Activated CD4-positive, alpha-beta T cell treated with anti-CD3 and anti-CD28 coated beads, Interleukin-2, amount 10 ng/mL, durations not matched to agents 24 days and 14 days (primary cell): ENCODE measurements at regions of chr2 and their contacts with region 1.

Region 1: DNA sequence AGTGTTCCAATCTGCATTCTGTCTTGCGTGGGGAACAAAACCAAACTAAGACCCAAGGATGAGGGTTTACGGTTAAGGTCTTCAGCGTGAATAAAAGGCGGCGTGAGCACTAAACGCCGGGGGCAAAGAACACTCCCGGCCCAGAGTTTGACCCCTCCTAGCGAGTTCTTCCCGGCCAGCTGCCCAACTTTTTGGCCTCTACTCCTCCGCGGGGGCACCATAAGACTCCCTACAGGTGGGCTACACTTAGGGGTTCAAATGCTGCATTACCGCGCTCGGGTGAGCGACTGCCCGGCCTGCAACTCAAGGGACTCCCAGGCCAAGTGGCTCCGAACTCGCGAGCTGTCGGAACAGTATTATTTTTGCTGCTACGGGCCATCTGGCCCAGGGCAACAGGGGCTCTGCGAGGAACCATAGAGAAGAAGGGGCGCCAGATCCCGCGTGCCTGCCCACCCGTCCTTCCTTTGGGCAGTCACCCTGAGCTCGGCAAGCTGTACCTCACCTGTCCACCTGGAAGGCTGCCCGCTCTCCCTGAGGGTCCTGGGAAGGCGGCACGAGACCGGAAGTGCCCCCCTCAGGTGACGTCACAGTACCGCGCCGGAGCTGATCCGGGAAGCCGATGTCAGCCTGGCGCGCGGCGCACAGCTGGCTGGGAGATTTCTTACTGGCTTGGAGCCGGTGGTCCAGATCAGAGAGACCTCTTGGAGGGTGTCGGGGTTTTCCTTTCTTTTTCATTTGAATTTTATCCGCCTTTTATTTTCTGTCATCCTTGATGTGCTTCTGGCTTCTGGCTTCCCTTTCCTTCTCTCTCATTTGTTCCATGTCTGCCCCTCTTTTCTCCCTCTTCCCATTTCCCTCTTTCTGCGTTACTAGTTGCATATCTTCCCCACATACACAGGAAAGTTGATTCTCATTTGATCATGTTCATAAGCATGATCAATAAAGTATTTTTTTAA is at the start of gene LDAH:
- DNase-seq: peak; percentile 95
- H3K4me3 Mint-ChIP-seq: peak within 1 kb of the TSS; percentile 96
- H3K27ac Mint-ChIP-seq: peak within 1 kb of the TSS; percentile 99
- H3K4me1 Mint-ChIP-seq: peaks cover 25% of the 10 kb centered on the region
- H3K27me3 Mint-ChIP-seq: peaks cover 4% of the 10 kb centered on the region
- total RNA-seq, gene LDAH: 31.6 and 37.7 TPM in 2 replicates

Region 2: GRCh38 chr2:20595431-20596192 is 227.2 kb before region 1 on chr2:
- intact Hi-C with region 1: no loop called
- DNase-seq: no peak
- H3K4me3 Mint-ChIP-seq: no peak overlapping the region
- H3K27ac Mint-ChIP-seq: peak overlapping the region; percentile 38
- H3K4me1 Mint-ChIP-seq: peaks cover 10% of the 10 kb centered on the region
- H3K27me3 Mint-ChIP-seq: no peaks in the 10 kb centered on the region

Region 3: DNA sequence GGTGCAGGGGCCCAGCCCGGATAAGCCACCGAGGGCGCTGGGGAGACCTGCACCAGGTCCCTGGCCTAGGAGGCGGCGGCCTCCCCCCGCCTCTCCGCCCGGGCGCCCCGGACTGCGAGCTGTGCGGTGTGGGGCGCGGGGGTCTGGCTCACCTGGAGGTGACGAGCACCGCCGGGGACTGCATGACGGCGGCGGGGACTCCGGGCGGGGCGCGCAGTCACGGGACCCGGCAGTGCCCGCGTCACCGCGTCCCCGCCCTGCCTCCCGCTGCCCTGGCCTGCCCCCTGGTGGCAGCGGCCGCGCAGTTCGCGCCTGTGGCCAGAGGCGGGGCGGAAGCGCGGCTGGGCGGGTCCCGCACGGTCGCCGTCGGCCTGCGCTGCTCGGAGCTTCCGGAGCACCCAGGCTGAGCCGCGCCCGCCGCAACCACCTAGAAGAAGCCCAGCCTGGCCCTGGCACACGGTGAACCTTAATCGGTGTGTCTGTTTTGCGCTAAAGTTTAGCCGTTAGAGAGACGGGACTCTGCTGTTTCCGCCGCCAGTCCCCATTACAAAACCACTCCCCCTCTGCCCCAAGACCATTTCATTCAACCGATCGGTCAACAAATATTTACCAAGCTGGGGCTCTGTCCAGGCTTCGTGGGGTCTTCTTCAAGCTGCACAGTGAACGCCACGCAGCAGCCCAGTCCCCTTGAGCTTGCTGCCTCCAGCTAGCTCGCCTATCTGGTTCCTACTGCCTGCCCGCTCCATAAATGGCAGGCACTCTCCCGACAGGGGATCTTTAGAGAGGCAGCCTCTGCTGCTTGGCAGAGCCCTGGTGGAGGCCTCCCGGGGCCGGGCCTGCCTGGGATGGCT is 171.7 kb before region 1 on chr2 and contains the start of gene HS1BP3:
- intact Hi-C with region 1: loop called (anchors 2 kb)
- DNase-seq: peak; percentile 98
- H3K4me3 Mint-ChIP-seq: peak within 1 kb of the TSS; percentile 85
- H3K27ac Mint-ChIP-seq: peak within 1 kb of the TSS; percentile 89
- H3K4me1 Mint-ChIP-seq: peaks cover 29% of the 10 kb centered on the region
- H3K27me3 Mint-ChIP-seq: peaks cover 11% of the 10 kb centered on the region
- total RNA-seq, gene HS1BP3: 7.1 and 8.9 TPM in 2 replicates

Region 4: GRCh38 chr2:20728114-20728758 is 94.6 kb before region 1 on chr2:
- intact Hi-C with region 1: no loop called
- DNase-seq: no peak
- H3K4me3 Mint-ChIP-seq: no peak overlapping the region
- H3K27ac Mint-ChIP-seq: no peak overlapping the region
- H3K4me1 Mint-ChIP-seq: peaks cover 2% of the 10 kb centered on the region
- H3K27me3 Mint-ChIP-seq: no peaks in the 10 kb centered on the region

Region 5: GRCh38 chr2:20868377-20868776 is 45.6 kb after region 1 on chr2:
- intact Hi-C with region 1: loop called (anchors 1 kb)
- DNase-seq: peak; percentile 86
- H3K4me3 Mint-ChIP-seq: no peak overlapping the region
- H3K27ac Mint-ChIP-seq: no peak overlapping the region
- H3K4me1 Mint-ChIP-seq: peaks cover 6% of the 10 kb centered on the region
- H3K27me3 Mint-ChIP-seq: peaks cover 53% of the 10 kb centered on the region